Breast epithelium (tissue), 4 donors: ENCODE measurements at regions of chr5 and their contacts with region 1.

Region 1: DNA sequence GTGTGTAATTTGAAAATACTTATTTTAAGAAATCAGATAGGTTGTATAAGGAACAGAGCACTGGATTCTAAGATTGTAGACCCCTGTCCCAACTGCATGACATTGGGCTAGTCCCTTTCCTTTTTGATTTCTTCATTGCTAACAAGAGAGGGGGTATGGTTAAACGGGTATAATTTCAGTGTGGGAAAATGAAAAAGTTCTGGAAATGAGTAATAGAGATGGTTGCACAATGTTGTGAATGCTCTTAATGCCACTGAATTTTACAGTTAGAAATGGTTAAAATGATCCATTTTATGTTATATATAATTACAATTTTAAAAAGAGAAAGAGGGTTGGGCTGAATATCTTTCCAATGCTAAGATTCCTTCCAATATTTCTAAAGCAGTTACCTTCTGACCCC is 103.3 kb upstream of the LHFPL2 start:
- DNase-seq: no peak
- H3K4me3 ChIP-seq: no peak overlapping the region
- H3K27ac ChIP-seq: no peak overlapping the region
- H3K4me1 ChIP-seq: no peaks in the 10 kb centered on the region
- H3K27me3 ChIP-seq: no peaks in the 10 kb centered on the region
- CTCF ChIP-seq: no peak
- POLR2A ChIP-seq: no peak

Region 2: GRCh38 chr5:78716206-78716605 is 35.7 kb before region 1 on chr5:
- intact Hi-C with region 1: loop called (anchors 1 kb)
- DNase-seq: no peak
- H3K4me3 ChIP-seq: no peak overlapping the region
- H3K27ac ChIP-seq: no peak overlapping the region
- H3K4me1 ChIP-seq: peaks cover 0 to 14% of the 10 kb centered on the region in 2 donors
- H3K27me3 ChIP-seq: no peaks in the 10 kb centered on the region
- CTCF ChIP-seq: no peak
- POLR2A ChIP-seq: no peak